ENCODE measurements at regions of chrX and their contacts with region 1.

Region 1: GRCh38 chrX:65595460-65595876 is 60.9 kb upstream of the LAS1L start:
- DNase-seq: peak; percentile 84
- ATAC-seq: peak; percentile 94
- H3K4me3 ChIP-seq: no peak overlapping the region
- H3K27ac ChIP-seq: peak overlapping the region; percentile 57; the same call in 1 of the 2 replicates
- H3K4me1 ChIP-seq: no peaks in the 10 kb centered on the region; the same call in 1 of the 2 replicates
- H3K27me3 ChIP-seq: no peaks in the 10 kb centered on the region
- CTCF ChIP-seq: peak; percentile 96

Region 2: DNA sequence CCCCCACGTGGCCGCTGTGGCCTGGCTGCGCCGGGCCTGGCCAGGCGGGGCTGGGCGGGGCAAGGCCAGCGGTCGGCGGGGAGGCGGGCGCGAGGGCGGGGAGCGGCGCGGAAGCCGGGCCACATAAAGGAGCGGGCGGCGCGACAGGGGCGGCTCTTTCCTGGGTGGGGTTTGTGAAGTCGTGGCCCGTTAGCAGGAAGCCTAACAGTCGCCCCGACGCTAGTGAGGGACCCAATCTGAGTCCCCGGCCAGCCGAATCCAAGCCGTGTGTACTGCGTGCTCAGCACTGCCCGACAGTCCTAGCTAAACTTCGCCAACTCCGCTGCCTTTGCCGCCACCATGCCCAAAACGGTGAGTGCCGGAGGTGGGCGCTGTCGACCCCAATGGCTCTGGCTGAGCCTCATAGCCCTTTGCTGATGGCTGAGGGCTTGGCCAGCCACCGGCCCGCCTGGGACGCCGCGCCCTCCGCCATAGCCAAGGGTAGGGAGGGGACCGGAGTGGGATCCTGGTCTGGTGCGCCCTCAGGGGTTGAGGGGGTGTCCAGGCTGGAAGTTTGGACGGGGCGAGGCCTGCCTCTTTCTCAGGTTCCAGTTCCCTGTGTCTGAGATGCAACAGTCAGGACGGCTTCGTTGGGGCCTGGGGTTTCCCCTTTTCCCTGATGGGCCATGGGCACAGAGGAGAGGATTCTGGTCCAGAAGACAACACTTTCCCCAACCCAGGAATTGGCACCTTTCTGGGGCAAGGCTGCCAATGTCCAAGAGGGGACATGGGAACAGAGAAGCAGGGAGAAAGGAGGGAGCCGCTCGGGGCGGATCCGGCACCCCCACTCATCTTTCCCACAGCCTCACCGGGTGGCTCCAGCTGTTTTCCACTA is 72.3 kb after region 1 on chrX and contains the start of gene MSN:
- CTCF ChIA-PET with region 1: no interaction called
- POLR2A ChIA-PET with region 1: no interaction called
- in situ Hi-C with region 1: no loop called
- intact Hi-C with region 1: loop called (anchors 1 kb)
- DNase-seq: no peak
- ATAC-seq: peak; percentile 97
- H3K4me3 ChIP-seq: peak within 1 kb of the TSS; percentile 74 to 86
- H3K27ac ChIP-seq: peak within 1 kb of the TSS; percentile 87
- H3K4me1 ChIP-seq: peaks cover 11% of the 10 kb centered on the region
- H3K27me3 ChIP-seq: no peaks in the 10 kb centered on the region
- CTCF ChIP-seq: peak; percentile 24; the same call in 1 of the 2 replicates
- total RNA-seq, gene MSN: 185 TPM

Region 3: GRCh38 chrX:65706041-65706828 is 110.8 kb after region 1 on chrX:
- CTCF ChIA-PET with region 1: no interaction called
- POLR2A ChIA-PET with region 1: no interaction called
- in situ Hi-C with region 1: no loop called
- intact Hi-C with region 1: loop called (anchors 10 kb)
- DNase-seq: peak; percentile 48
- ATAC-seq: peak; percentile 75
- H3K4me3 ChIP-seq: no peak overlapping the region
- H3K27ac ChIP-seq: no peak overlapping the region
- H3K4me1 ChIP-seq: peaks cover 5% of the 10 kb centered on the region
- H3K27me3 ChIP-seq: no peaks in the 10 kb centered on the region
- CTCF ChIP-seq: no peak